Activated T-helper 2 cell treated with anti-CD3 and anti-CD28 coated beads, Interferon-gamma antibody, Interleukin-2, Interleukin-4, amounts not matched to agents 10 μg/mL and 5 μg/mL and 100 μg/mL, durations not matched to agents 14 hours and 24 hours and 36 hours (primary cell): ENCODE measurements at regions of chr2 and their contacts with region 1.

Region 1: DNA sequence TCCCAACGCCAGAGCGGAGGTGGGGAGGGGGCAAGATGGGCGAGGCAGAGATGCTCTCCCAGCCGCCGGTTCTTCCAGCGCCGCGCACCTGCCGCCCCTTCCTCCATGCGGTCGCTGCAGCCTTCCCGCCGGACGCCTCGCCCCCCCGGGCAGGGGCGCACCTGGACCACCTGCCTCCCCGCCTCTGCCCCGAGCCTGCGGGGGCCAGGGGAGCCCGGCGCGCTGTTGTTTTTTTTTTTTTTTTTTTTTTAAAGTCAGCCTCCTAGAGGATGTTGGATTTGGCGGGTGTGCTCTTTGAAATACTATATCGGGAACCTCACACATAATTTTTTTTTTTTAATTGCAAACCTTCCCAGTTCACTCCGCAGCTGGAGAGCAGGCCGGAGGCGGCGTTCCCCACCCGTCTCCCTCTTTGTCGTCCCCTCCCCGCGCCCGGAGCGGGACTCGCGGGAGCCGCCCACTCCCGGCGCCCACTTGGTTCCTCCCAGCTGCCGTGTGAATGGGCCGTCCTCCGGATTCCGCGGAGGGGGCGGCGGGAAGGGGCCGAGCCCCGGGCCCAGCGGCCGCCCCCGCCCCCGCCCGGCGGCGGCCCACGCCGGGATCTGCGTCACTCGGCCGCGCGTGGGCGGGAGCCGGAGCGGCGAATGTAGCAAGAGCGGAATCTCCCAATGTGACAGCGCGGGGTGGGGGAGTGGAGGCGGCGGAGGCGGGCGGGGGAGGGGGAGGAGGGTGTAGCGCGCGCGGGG is 421 bp upstream of the NAB1 start:
- DNase-seq: peak; percentile 74
- H3K4me3 Mint-ChIP-seq: peak overlapping the region; percentile 73
- H3K27ac Mint-ChIP-seq: peak overlapping the region; percentile 74
- H3K4me1 Mint-ChIP-seq: peaks cover 40% of the 10 kb centered on the region
- H3K27me3 Mint-ChIP-seq: no peaks in the 10 kb centered on the region

Region 2: DNA sequence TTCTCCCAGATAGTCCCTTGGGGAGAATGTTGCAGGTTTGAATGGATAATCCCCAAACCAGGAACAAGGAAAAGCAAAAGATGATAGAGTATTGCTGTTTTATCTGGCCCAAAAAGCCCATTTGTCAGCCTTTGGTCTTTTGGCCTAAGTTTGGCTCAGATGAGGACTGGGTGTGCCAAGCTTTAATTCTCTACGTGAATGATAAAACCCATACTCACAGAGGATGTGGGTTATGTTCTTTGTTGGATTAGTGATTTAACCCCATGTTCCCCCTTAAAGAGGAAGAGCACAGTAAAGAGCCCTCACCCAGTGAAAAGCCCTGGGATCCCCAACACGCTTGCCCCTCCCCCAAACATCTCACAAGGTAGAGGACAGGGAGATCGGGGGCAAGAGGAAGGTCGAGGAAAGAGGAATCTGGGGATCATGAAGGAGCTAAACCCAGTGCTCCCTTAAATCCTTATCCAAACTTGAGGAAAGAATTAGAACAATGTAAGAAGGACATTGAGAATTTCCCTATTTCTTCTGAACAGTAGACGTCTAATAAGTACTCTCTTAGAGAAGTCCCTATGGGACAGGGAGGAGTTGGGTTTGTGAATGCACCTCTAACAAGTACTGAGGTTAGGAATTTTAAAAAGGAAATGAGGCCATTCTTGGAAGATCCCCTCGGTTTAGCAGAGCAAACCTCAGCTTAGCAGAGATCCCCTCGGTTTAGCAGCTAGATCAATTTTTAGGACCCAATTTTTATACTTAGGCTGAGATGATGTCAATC is 433.9 kb before region 1 on chr2:
- intact Hi-C with region 1: no loop called
- DNase-seq: no peak
- H3K4me3 Mint-ChIP-seq: no peak overlapping the region
- H3K27ac Mint-ChIP-seq: no peak overlapping the region
- H3K4me1 Mint-ChIP-seq: peaks cover 3% of the 10 kb centered on the region
- H3K27me3 Mint-ChIP-seq: no peaks in the 10 kb centered on the region

Region 3: GRCh38 chr2:190664240-190664639 is 15.8 kb after region 1 on chr2:
- intact Hi-C with region 1: loop called (anchors 2 kb)
- DNase-seq: no peak
- H3K4me3 Mint-ChIP-seq: no peak overlapping the region
- H3K27ac Mint-ChIP-seq: no peak overlapping the region
- H3K4me1 Mint-ChIP-seq: peaks cover 31% of the 10 kb centered on the region
- H3K27me3 Mint-ChIP-seq: no peaks in the 10 kb centered on the region

Region 4: GRCh38 chr2:190679813-190680591 is 31.5 kb after region 1 on chr2:
- intact Hi-C with region 1: loop called (anchors 1 kb)
- DNase-seq: peak; percentile 29
- H3K4me3 Mint-ChIP-seq: peak overlapping the region; percentile 51
- H3K27ac Mint-ChIP-seq: peak overlapping the region; percentile 92
- H3K4me1 Mint-ChIP-seq: peaks cover 45% of the 10 kb centered on the region
- H3K27me3 Mint-ChIP-seq: no peaks in the 10 kb centered on the region

Region 5: DNA sequence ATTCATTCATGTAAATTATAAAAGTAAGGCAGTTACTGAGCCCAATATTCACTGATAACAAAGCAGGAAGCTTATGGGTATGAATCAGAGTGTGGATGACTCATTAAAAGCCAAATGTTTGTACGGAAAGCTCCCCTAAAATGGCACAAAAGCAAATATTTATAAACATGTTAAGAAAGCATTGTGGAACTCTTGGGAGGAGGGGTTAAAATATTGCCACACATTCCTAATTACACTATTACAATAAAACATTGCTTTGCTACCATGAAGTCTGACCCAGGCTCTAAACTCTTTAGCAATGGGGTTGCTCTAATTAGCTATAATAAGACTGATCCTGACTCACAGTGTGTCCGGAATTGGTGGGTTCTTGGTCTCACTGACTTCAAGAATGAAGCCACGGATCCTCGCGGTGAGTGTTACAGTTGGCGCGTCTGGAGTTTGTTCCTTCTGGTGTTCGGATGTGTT is 111.3 kb after region 1 on chr2:
- intact Hi-C with region 1: loop called (anchors 5 kb)
- DNase-seq: no peak
- H3K4me3 Mint-ChIP-seq: no peak overlapping the region
- H3K27ac Mint-ChIP-seq: peak overlapping the region; percentile 38
- H3K4me1 Mint-ChIP-seq: peaks cover 51% of the 10 kb centered on the region
- H3K27me3 Mint-ChIP-seq: no peaks in the 10 kb centered on the region